Colonic mucosa (tissue), 4 donors: ENCODE measurements at regions of chr19 and their contacts with region 1.

Region 1: DNA sequence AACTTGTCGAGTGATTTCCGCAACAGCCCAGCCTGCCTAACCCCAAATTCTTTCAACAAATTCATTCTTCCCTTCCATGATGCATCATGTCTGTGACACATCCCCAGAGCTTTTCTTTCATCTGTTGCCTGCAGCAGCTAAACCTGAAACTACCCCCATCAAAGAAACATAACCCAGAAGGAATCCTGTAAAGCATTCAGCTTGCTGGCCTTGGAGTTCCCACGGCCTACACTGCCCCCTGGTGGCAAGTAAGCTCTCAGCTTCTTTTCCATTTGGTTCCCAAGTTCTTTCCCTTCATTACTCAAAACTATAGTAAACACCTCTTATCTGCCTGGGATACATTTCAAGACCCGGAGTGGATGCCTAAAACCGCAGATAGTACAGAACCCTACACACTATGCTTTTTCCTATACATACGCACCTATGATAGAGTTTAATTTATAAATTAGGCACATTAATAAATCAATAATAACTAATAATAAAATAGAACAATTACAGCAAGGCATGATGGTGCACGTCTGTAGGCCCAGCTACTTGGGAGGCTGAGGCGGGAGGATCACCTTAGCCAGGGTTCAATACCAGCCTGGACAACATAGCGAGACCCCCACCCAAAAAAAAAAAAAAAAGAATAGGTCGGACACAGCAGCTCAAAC is 7.4 kb downstream of the ETHE1 start:
- DNase-seq: peak; percentile 77
- H3K4me3 ChIP-seq: no peak overlapping the region
- H3K27ac ChIP-seq: no peak overlapping the region
- H3K4me1 ChIP-seq: no peaks in the 10 kb centered on the region
- H3K27me3 ChIP-seq: no peaks in the 10 kb centered on the region
- CTCF ChIP-seq: peak; percentile 87

Region 2: DNA sequence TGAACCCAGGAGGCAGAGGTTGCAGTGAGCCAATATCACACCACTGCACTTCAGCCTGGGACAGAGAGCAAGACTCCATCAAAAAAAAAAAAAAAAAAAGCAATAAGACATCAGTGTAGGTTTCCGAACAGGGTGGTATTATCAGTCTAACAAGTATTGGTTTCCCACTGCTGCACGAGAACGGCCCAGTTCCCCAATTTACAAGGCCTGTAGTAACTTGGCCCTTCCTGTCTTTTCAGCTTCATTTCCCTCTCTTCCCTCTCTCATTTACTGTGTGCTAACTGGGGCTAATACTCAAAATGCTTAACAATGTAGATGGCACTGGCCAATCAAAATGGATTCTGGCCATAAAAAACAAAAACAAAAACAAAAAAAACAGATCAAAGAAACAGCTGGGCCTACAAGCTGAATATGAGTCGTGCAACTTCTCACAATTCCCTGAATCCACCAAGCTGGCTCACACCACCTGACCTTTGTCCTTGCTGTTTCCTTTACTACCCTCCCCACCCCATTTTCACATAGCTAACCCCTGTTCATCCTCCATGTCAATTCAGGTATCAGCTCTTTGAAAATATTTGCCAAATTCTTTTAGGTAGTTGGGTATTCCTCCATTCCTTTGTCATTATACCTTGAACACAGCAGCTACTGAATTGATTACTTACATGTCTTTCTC is 102.5 kb before region 1 on chr19:
- intact Hi-C with region 1: no loop called
- DNase-seq: peak; percentile 36
- H3K4me3 ChIP-seq: no peak overlapping the region
- H3K27ac ChIP-seq: no peak overlapping the region
- H3K4me1 ChIP-seq: no peaks in the 10 kb centered on the region
- H3K27me3 ChIP-seq: no peaks in the 10 kb centered on the region
- CTCF ChIP-seq: no peak

Region 3: GRCh38 chr19:43446746-43447489 is 72.6 kb before region 1 on chr19:
- intact Hi-C with region 1: loop called (anchors 2 kb)
- DNase-seq: peak; percentile 81
- H3K4me3 ChIP-seq: no peak overlapping the region
- H3K27ac ChIP-seq: no peak overlapping the region
- H3K4me1 ChIP-seq: no peaks in the 10 kb centered on the region
- H3K27me3 ChIP-seq: no peaks in the 10 kb centered on the region
- CTCF ChIP-seq: peak; percentile 97